Heart right ventricle (tissue), 16 donors: ENCODE measurements at regions of chr14 and their contacts with region 1.

Region 1: DNA sequence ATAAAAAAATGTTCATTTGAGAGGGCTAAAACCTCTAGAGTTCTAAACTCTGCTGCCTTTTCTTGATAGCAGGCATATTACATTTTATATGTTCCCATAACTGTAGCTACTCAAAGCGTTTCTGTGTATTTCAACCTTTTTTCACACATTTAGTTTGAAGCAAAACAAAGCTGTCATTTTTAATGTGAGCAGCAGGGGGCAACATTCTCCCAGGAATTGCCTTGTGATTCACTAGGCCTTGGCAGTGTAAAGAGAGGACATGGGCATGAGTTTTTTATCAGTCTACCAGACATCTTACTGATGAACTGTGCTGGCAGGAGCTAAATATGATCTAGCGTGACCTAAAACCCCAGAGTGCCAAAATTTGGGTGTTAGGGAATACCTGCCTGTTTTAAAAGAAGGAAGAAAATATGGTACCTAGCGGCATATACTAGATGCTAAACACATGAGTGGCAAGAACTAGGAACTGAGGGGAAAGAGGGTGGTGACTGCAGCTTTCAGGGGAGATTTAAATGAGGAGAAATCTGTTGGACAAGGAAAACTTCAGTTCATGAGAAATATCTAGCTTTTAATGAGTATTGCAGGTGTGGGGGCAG is 65.3 kb downstream of the IFT43 start:
- DNase-seq: peak in 1 of 2 donors; percentile 65
- ATAC-seq: peak in 7 of 8 donors; percentile 46 to 87 (median 66)
- H3K4me3 ChIP-seq: no peak overlapping the region
- H3K27ac ChIP-seq: no peak overlapping the region
- H3K4me1 ChIP-seq: peaks cover 0 to 13% (median 0%) of the 10 kb centered on the region in 9 donors
- H3K27me3 ChIP-seq: no peaks in the 10 kb centered on the region
- CTCF ChIP-seq: peak; percentile 64 to 87 (median 76)

Region 2: GRCh38 chr14:76181546-76181945 is 130.7 kb after region 1 on chr14:
- intact Hi-C with region 1: loop called in 1 of 10 experiments (anchors 5 kb)
- DNase-seq: no peak
- ATAC-seq: no peak
- H3K4me3 ChIP-seq: no peak overlapping the region
- H3K27ac ChIP-seq: no peak overlapping the region
- H3K4me1 ChIP-seq: peaks cover 0 to 5% (median 0%) of the 10 kb centered on the region in 9 donors
- H3K27me3 ChIP-seq: no peaks in the 10 kb centered on the region
- CTCF ChIP-seq: peak in 7 of 9 donors; percentile 11 to 46 (median 27)

Region 3: GRCh38 chr14:76352639-76353281 is 301.9 kb after region 1 on chr14:
- intact Hi-C with region 1: loop called (anchors 1 to 10 kb)
- DNase-seq: peak; percentile 56 to 68
- ATAC-seq: peak; percentile 70 to 84 (median 76)
- H3K4me3 ChIP-seq: peak overlapping the region in 8 of 10 donors; percentile 9 to 40 (median 28)
- H3K27ac ChIP-seq: no peak overlapping the region
- H3K4me1 ChIP-seq: peaks cover 0 to 30% (median 14%) of the 10 kb centered on the region in 9 donors
- H3K27me3 ChIP-seq: peaks cover 0 to 14% (median 4%) of the 10 kb centered on the region in 7 donors
- CTCF ChIP-seq: peak; percentile 79 to 95 (median 90)

Region 4: DNA sequence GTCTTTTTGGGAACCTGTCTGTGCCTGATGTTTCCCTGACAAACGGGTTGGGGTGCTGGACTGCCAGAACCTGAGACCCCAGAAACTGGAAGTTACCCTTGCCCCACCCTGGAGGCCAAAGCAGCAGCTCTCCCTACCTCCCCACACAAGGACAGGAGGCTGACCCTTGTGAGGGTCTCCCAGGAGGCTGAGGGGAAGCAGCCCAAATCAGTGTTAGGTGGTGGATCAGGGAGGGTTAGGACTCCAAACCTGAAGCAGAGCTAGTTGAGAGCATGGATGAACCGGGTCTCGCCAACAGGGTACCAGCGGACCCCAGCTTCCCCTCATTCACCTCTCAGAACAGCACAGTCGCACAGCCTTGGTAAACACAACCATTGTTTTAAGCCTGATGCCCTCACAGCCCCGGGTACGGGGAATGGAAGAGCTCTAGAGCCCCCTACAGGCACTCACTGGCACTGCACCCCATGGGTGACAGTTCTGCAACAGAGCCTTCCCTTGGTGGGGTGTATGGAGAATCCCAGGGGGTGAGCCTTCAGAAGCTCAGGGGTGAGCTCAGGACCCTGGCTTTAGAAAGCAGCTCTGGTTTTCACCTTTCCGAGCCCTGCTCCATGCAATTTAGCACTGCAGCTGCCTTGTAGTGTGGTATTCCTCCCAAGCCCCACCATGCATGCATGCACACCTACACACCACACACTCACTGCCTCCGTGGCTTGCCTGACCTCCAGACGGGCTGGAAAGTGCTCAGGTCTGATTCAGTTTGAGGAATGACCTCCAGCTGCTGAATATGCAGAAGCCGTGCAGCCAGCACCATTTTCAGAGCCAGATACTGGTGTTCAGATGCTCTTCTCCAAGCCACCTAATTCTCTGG is 336.3 kb after region 1 on chr14:
- intact Hi-C with region 1: loop called (anchors 1 to 10 kb)
- DNase-seq: peak; percentile 63 to 64
- ATAC-seq: peak; percentile 51 to 90 (median 86)
- H3K4me3 ChIP-seq: no peak overlapping the region
- H3K27ac ChIP-seq: no peak overlapping the region
- H3K4me1 ChIP-seq: peaks cover 0 to 7% (median 0%) of the 10 kb centered on the region in 9 donors
- H3K27me3 ChIP-seq: peaks cover 0 to 47% (median 19%) of the 10 kb centered on the region in 7 donors
- CTCF ChIP-seq: peak; percentile 89 to 98 (median 96)